ENCODE measurements at regions of chr12 and their contacts with region 1.

Region 1: GRCh38 chr12:44446181-44446580 is 429.9 kb downstream of the NELL2 start:
- DNase-seq: no peak
- ATAC-seq: no peak
- H3K4me3 ChIP-seq: no peak overlapping the region
- H3K27ac ChIP-seq: no peak overlapping the region
- H3K4me1 ChIP-seq: peaks cover 4% of the 10 kb centered on the region; the same call in 1 of the 2 replicates
- H3K27me3 ChIP-seq: no peaks in the 10 kb centered on the region
- CTCF ChIP-seq: no peak
- EP300 ChIP-seq: no peak
- POLR2A ChIP-seq: no peak
- RAD21 ChIP-seq: no peak

Region 2: GRCh38 chr12:44431647-44432343 is 14.4 kb before region 1 on chr12:
- CTCF ChIA-PET with region 1: interaction called, 7 read pairs
- POLR2A ChIA-PET with region 1: interaction called, 13 read pairs
- RAD21 ChIA-PET with region 1: interaction called, 68 read pairs
- SMC1A ChIA-PET with region 1: interaction called, 51 read pairs
- in situ Hi-C with region 1: no loop called
- intact Hi-C with region 1: no loop called
- DNase-seq: peak; percentile 56
- ATAC-seq: peak; percentile 93
- H3K4me3 ChIP-seq: no peak overlapping the region
- H3K27ac ChIP-seq: peak overlapping the region; percentile 58
- H3K4me1 ChIP-seq: peaks cover 22% of the 10 kb centered on the region; the same call in 1 of the 2 replicates
- H3K27me3 ChIP-seq: no peaks in the 10 kb centered on the region
- CTCF ChIP-seq: no peak
- EP300 ChIP-seq: peak; percentile 72 to 74
- POLR2A ChIP-seq: no peak
- RAD21 ChIP-seq: no peak

Region 3: GRCh38 chr12:44459569-44459968 is 13.4 kb after region 1 on chr12:
- CTCF ChIA-PET with region 1: interaction called, 8 read pairs
- POLR2A ChIA-PET with region 1: interaction called, 5 read pairs
- RAD21 ChIA-PET with region 1: interaction called, 8 read pairs
- SMC1A ChIA-PET with region 1: interaction called, 22 read pairs
- in situ Hi-C with region 1: no loop called
- intact Hi-C with region 1: no loop called
- DNase-seq: no peak
- ATAC-seq: no peak
- H3K4me3 ChIP-seq: no peak overlapping the region
- H3K27ac ChIP-seq: no peak overlapping the region
- H3K4me1 ChIP-seq: no peaks in the 10 kb centered on the region
- H3K27me3 ChIP-seq: no peaks in the 10 kb centered on the region
- CTCF ChIP-seq: no peak
- EP300 ChIP-seq: no peak
- POLR2A ChIP-seq: no peak
- RAD21 ChIP-seq: no peak

Measured in GM12878 (cell line).